ENCODE measurements at regions of chr2 and their contacts with region 1.

Region 1: DNA sequence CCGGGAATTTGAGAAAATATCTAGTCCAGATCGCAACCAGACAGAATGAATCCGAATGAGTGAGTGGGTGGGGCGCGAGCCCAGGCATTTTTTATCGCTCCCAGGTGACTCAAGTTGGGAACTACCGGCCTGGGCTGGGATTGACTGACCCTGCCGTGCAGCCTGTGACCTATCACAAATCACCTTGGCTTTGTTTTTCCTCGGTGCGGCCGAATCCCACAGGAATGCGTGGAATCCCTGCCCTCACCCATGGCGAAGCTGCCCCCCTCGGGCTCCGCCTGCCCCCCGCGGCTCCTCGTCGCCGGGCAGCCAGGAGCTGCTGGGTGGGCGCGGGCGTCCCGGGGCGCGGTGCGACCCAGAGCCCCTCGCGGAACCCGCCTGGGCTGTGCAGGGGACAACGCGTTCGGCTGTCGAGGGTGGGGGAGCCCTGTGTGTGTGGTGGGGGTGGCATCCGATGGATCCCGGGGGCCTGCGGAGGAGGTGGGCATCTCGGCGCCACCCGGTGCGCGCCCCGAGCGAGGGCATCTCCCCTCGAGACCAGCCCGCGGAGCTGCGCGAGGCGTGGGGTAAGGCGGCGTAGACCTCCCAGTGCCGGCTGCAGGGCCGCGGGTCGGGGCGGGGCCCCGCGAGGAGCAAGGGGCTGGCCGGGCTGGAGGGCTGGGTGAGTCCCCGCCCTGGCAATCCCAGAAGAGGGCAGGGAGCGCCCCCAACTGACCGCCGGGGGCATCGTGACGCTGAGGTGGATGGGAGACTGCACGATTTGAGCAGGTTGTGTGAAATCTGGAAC is 16.5 kb downstream of the B3GNT7 start:
- DNase-seq: peak; percentile 74
- H3K27ac ChIP-seq: peak overlapping the region; percentile 14; the same call in 1 of the 2 replicates
- CTCF ChIP-seq: peak; percentile 91

Region 2: GRCh38 chr2:231000211-231000904 is 411.7 kb before region 1 on chr2:
- CTCF ChIA-PET with region 1: no interaction called
- POLR2A ChIA-PET with region 1: no interaction called
- DNase-seq: no peak
- H3K27ac ChIP-seq: no peak overlapping the region
- CTCF ChIP-seq: no peak

Region 3: GRCh38 chr2:231297108-231297908 is 114.7 kb before region 1 on chr2:
- CTCF ChIA-PET with region 1: interaction called, 12 read pairs
- POLR2A ChIA-PET with region 1: no interaction called
- DNase-seq: peak; percentile 51
- H3K27ac ChIP-seq: no peak overlapping the region
- CTCF ChIP-seq: peak; percentile 23; the same call in 1 of the 2 replicates

Region 4: DNA sequence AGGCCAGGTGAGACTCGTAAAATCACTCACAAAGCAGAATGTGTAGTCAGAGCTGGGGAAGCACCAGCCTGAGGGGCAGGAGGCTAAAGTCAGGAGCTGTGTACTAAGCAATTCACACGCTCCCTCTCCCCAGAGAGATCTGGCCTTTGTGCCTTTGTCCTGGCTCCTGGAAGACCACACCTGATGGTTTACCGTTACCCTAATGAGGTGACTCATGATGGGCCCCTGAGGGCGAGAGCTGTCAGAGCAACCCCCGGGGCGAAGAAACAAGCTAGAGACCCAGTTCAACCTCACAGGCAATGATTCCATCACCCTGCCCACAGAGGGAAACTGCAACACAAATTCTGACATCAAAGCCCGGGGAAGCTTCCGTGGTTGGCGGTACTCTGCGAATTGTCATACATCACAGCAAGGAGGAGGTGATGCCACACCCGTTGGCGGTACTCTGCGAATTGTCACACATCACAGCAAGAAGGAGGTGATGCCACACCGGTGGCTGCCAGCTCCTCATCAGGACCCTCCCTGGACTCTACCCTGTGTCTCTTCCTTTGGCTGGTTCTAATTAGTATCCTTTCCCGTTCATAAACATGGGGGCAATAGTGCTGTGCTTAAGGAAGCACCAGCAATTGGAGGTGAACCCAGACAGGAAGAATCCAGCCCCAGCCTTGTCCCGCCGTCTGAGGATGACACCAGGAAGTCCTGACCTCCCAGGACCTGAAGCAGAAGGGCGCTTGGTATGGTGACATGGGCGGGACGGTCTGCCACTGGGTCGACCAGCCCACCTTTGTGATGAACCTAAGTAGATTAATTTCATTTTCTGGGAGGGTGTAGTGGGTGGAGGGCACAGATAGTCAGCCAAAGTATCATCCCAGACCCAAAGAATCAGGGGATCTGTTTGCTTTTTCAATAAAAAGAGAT is 14.0 kb after region 1 on chr2:
- CTCF ChIA-PET with region 1: interaction called, 10 read pairs
- POLR2A ChIA-PET with region 1: no interaction called
- DNase-seq: peak; percentile 9
- H3K27ac ChIP-seq: no peak overlapping the region
- CTCF ChIP-seq: no peak